Cardiac septum (tissue), 1 donor: ENCODE measurements at regions of chr10 and their contacts with region 1.

Region 1: GRCh38 chr10:124557648-124558600 is 96.3 kb downstream of the LHPP start:
- DNase-seq: no peak

Region 2: GRCh38 chr10:124621637-124622036 is 63.7 kb after region 1 on chr10:
- intact Hi-C with region 1: loop called (anchors 2 kb)
- DNase-seq: no peak